HepG2 (cell line): ENCODE measurements at regions of chr2 and their contacts with region 1.

Region 1: GRCh38 chr2:170409164-170409535 is 231.2 kb downstream of the MYO3B start:
- DNase-seq: peak; percentile 71
- ATAC-seq: peak; percentile 84
- H3K4me3 ChIP-seq: peak overlapping the region in 1 of 3 experiments; percentile 11; a peak in 1 of 6 replicates
- H3K27ac ChIP-seq: no peak overlapping the region
- H3K4me1 ChIP-seq: peaks cover 12% of the 10 kb centered on the region
- H3K27me3 ChIP-seq: peaks cover 2 to 53% of the 10 kb centered on the region in 2 experiments; a peak in 4 of 5 replicates
- CTCF ChIP-seq: peak; percentile 88
- EP300 ChIP-seq: no peak
- POLR2A ChIP-seq: no peak
- RAD21 ChIP-seq: peak; percentile 85

Region 2: DNA sequence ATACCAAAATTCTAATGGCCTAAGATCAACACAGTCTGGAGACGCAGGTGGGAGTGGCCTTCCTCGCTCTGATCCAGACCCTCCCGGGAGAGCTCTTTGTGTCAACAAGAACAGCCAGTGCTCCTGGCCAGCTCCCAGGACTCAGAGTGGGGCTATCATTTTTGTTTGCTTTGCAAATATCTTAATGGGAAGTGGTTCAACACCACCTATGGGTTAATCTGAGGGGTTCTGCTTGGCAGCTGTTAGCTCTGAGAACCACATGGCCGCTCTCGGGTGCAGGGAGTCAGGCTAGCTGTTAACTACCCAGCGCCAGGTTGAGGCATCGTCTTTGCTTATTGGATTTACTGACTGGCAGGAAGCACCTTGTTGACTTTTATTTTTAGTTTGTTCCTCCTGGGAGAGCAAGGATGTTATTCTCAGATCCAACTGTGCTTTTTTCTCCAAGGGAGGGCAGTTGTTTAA is 121.2 kb after region 1 on chr2:
- CTCF ChIA-PET with region 1: no interaction called
- POLR2A ChIA-PET with region 1: no interaction called
- in situ Hi-C with region 1: no loop called
- intact Hi-C with region 1: loop called (anchors 1 kb)
- DNase-seq: peak; percentile 94
- ATAC-seq: peak; percentile 96
- H3K4me3 ChIP-seq: peak overlapping the region in 2 of 3 experiments; percentile 5 to 23; a peak in 3 of 6 replicates
- H3K27ac ChIP-seq: no peak overlapping the region
- H3K4me1 ChIP-seq: peaks cover 28% of the 10 kb centered on the region
- H3K27me3 ChIP-seq: peaks cover 2 to 38% of the 10 kb centered on the region in 2 experiments; a peak in 3 of 5 replicates
- CTCF ChIP-seq: peak; percentile 64
- EP300 ChIP-seq: no peak; a peak in 1 of 4 replicates
- POLR2A ChIP-seq: no peak
- RAD21 ChIP-seq: 0 out of 2 replicates have a peak, but pooled peaks have one; percentile 39